Activated CD4-positive, alpha-beta T cell treated with anti-CD3 and anti-CD28 coated beads for 36 hours (primary cell): ENCODE measurements at regions of chr10 and their contacts with region 1.

Region 1: GRCh38 chr10:11611248-11612020 is at the start of gene USP6NL:
- DNase-seq: peak; percentile 71
- ATAC-seq: peak; percentile 42
- H3K4me3 Mint-ChIP-seq: peak within 1 kb of the TSS; percentile 83
- H3K27ac Mint-ChIP-seq: peak within 1 kb of the TSS; percentile 81
- H3K4me1 Mint-ChIP-seq: peaks cover 43% of the 10 kb centered on the region
- H3K27me3 Mint-ChIP-seq: peaks cover 2% of the 10 kb centered on the region
- total RNA-seq, gene USP6NL: 4.4 to 5.4 TPM

Region 2: DNA sequence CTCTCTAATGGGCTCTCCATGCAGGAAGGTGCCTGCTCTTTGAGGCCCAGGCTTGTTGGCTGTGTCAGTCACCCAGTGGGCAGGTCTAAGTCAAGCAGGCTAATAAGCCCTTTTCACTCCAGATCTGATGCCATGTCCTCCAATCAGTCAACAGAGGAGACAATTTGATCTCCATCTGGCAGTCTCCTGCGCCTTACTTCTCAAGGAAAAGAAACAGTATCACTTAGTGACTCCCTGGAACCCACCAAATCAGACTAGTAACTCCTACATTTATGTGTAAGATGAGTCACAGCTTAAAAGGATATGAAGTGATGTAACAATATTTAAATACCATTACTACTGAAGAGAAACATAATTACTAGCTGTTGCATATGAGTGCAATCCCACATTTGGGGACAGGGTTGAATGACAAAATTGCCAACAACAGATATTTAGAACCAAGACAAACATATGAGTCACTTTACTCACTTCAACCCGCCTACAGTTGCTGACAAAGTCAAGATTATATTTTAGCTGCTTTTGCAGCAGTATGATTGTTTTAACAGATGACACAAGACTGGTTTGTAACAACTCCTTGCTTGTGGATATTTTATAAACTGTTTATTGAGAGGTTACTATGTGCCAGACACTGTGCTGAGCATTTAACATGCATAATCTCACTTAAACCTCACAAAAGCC is 72.1 kb before region 1 on chr10:
- CTCF ChIA-PET with region 1: no interaction called
- POLR2A ChIA-PET with region 1: no interaction called
- intact Hi-C with region 1: loop called in 1 of 2 experiments (anchors 5 kb)
- DNase-seq: peak; percentile 16
- ATAC-seq: peak; percentile 89
- H3K4me3 Mint-ChIP-seq: no peak overlapping the region
- H3K27ac Mint-ChIP-seq: peak overlapping the region; percentile 26
- H3K4me1 Mint-ChIP-seq: peaks cover 14% of the 10 kb centered on the region
- H3K27me3 Mint-ChIP-seq: peaks cover 3% of the 10 kb centered on the region

Region 3: GRCh38 chr10:11551916-11552602 is 59.4 kb before region 1 on chr10:
- CTCF ChIA-PET with region 1: interaction called, 6 read pairs
- POLR2A ChIA-PET with region 1: no interaction called
- intact Hi-C with region 1: loop called in 1 of 2 experiments (anchors 2 kb)
- DNase-seq: no peak
- ATAC-seq: peak; percentile 90
- H3K4me3 Mint-ChIP-seq: no peak overlapping the region
- H3K27ac Mint-ChIP-seq: peak overlapping the region; percentile 72
- H3K4me1 Mint-ChIP-seq: peaks cover 38% of the 10 kb centered on the region
- H3K27me3 Mint-ChIP-seq: no peaks in the 10 kb centered on the region

Region 4: DNA sequence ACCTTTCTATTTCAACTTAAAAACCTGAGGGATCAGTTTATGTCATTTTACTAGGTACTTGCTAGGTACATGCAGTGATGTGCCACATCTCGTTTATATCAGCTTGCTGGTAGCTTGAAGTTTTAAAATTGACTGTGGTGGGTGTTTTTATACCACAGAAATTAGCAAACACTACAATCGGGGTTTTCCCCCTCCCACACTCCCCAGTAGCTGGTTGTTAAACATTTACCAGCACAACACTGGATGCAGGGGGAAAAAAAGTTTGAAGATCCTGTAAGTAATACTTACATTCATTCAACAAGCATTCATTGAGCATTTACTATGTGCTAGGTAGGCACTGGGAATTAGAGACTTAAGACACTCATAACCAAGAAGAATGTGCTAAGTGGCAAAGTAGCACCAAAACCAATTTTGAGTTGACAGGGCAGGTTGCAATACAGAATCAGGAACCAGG is 32.6 kb before region 1 on chr10:
- CTCF ChIA-PET with region 1: no interaction called
- POLR2A ChIA-PET with region 1: no interaction called
- intact Hi-C with region 1: loop called (anchors 2 kb)
- DNase-seq: peak; percentile 77
- ATAC-seq: peak; percentile 74
- H3K4me3 Mint-ChIP-seq: no peak overlapping the region
- H3K27ac Mint-ChIP-seq: peak overlapping the region; percentile 21
- H3K4me1 Mint-ChIP-seq: peaks cover 46% of the 10 kb centered on the region
- H3K27me3 Mint-ChIP-seq: peaks cover 5% of the 10 kb centered on the region

Region 5: GRCh38 chr10:11684717-11685645 is 73.5 kb after region 1 on chr10:
- CTCF ChIA-PET with region 1: interaction called, 3 read pairs
- POLR2A ChIA-PET with region 1: no interaction called
- intact Hi-C with region 1: loop called (anchors 1 to 2 kb)
- DNase-seq: peak; percentile 81
- ATAC-seq: peak; percentile 93
- H3K4me3 Mint-ChIP-seq: peak overlapping the region; percentile 72
- H3K27ac Mint-ChIP-seq: peak overlapping the region; percentile 94
- H3K4me1 Mint-ChIP-seq: peaks cover 49% of the 10 kb centered on the region
- H3K27me3 Mint-ChIP-seq: peaks cover 4% of the 10 kb centered on the region

Region 6: GRCh38 chr10:11724938-11725776 is 113.7 kb after region 1 on chr10:
- CTCF ChIA-PET with region 1: no interaction called
- POLR2A ChIA-PET with region 1: no interaction called
- intact Hi-C with region 1: no loop called
- DNase-seq: no peak
- ATAC-seq: peak; percentile 83
- H3K4me3 Mint-ChIP-seq: no peak overlapping the region
- H3K27ac Mint-ChIP-seq: no peak overlapping the region
- H3K4me1 Mint-ChIP-seq: peaks cover 5% of the 10 kb centered on the region
- H3K27me3 Mint-ChIP-seq: peaks cover 13% of the 10 kb centered on the region

Region 7: GRCh38 chr10:11742005-11742778 is 130.8 kb after region 1 on chr10 and contains the start of gene ECHDC3:
- CTCF ChIA-PET with region 1: no interaction called
- POLR2A ChIA-PET with region 1: no interaction called
- intact Hi-C with region 1: loop called in 1 of 2 experiments (anchors 2 kb)
- DNase-seq: peak; percentile 72
- ATAC-seq: peak; percentile 87
- H3K4me3 Mint-ChIP-seq: peak within 1 kb of the TSS; percentile 61
- H3K27ac Mint-ChIP-seq: no peak within 1 kb of the TSS
- H3K4me1 Mint-ChIP-seq: peaks cover 6% of the 10 kb centered on the region
- H3K27me3 Mint-ChIP-seq: peaks cover 14% of the 10 kb centered on the region
- total RNA-seq, gene ECHDC3: 3.5 to 3.8 TPM